ENCODE measurements at regions of chr11 and their contacts with region 1.

Region 1: GRCh38 chr11:6619004-6619745 is at the start of gene TPP1:
- DNase-seq: peak; percentile 79 to 96 (median 89)
- ATAC-seq: peak; percentile 91
- H3K4me3 ChIP-seq: peak within 1 kb of the TSS; percentile 80 to 89
- H3K4me3 Mint-ChIP-seq: no peak within 1 kb of the TSS
- H3K27ac ChIP-seq: peak within 1 kb of the TSS; percentile 75 to 96
- H3K27ac Mint-ChIP-seq: no peak within 1 kb of the TSS
- H3K4me1 ChIP-seq: peaks cover 23% of the 10 kb centered on the region
- H3K4me1 Mint-ChIP-seq: peaks cover 9% of the 10 kb centered on the region
- H3K27me3 ChIP-seq: no peaks in the 10 kb centered on the region
- H3K27me3 Mint-ChIP-seq: no peaks in the 10 kb centered on the region
- CTCF ChIP-seq: no peak
- total RNA-seq, gene TPP1: 31.1 to 34.8 TPM

Region 2: DNA sequence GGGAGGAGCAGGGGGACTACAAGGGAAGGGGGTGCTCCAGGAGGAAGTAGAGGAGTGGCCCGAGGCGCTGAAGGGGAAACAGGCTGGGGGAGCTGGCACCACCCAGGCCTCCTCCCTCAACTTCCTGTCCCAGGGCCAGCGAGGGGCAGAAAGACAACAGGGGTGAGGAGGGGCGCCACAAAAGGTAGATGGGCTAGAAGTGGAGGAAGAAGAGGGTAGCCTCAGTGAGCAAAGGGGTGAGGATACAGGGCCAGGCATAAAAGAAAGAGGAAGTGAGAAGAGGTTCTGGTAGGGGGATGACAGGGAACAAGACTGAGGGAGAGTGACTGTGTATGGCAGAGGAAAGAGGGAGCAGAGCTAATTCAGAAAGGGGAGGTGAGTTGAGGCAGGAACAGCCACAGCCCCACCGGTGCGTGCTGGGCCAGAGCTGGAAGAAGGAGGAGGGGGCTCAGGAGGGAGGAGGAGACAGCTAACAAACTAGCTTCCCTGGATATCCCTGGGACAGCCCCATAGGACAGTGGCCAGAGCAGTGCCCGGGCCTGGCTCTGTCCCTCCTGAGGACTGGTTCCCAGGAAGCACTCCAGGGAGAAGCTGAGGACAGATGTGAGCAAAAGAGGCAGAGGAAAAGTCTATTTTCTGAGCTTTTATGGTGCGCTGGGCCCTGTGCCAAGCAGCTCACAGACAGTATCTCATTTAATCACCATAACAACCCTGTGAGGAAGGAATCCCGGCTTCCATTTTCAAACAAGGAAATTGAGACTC is 27.9 kb after region 1 on chr11:
- CTCF ChIA-PET with region 1: interaction called, 9 read pairs
- POLR2A ChIA-PET with region 1: interaction called, 7 read pairs
- intact Hi-C with region 1: loop called in 1 of 2 experiments (anchors 2 kb)
- DNase-seq: peak in 8 of 9 experiments; percentile 17 to 76 (median 37)
- ATAC-seq: peak; percentile 61
- H3K4me3 ChIP-seq: peak overlapping the region; percentile 1 to 39
- H3K4me3 Mint-ChIP-seq: no peak overlapping the region
- H3K27ac ChIP-seq: peak overlapping the region; percentile 48 to 80
- H3K27ac Mint-ChIP-seq: no peak overlapping the region
- H3K4me1 ChIP-seq: peaks cover 79% of the 10 kb centered on the region
- H3K4me1 Mint-ChIP-seq: no peaks in the 10 kb centered on the region
- H3K27me3 ChIP-seq: no peaks in the 10 kb centered on the region
- H3K27me3 Mint-ChIP-seq: no peaks in the 10 kb centered on the region
- CTCF ChIP-seq: no peak

Region 3: GRCh38 chr11:6655020-6655789 is 36.0 kb after region 1 on chr11:
- CTCF ChIA-PET with region 1: interaction called, 3 read pairs
- POLR2A ChIA-PET with region 1: interaction called, 8 read pairs
- intact Hi-C with region 1: loop called in 1 of 2 experiments (anchors 2 kb)
- DNase-seq: peak in 7 of 9 experiments; percentile 11 to 62 (median 52)
- ATAC-seq: peak; percentile 58
- H3K4me3 ChIP-seq: peak overlapping the region; percentile 42 to 43
- H3K4me3 Mint-ChIP-seq: no peak overlapping the region
- H3K27ac ChIP-seq: peak overlapping the region; percentile 6 to 44
- H3K27ac Mint-ChIP-seq: no peak overlapping the region
- H3K4me1 ChIP-seq: peaks cover 36% of the 10 kb centered on the region
- H3K4me1 Mint-ChIP-seq: peaks cover 12% of the 10 kb centered on the region
- H3K27me3 ChIP-seq: no peaks in the 10 kb centered on the region
- H3K27me3 Mint-ChIP-seq: no peaks in the 10 kb centered on the region
- CTCF ChIP-seq: no peak

Region 4: DNA sequence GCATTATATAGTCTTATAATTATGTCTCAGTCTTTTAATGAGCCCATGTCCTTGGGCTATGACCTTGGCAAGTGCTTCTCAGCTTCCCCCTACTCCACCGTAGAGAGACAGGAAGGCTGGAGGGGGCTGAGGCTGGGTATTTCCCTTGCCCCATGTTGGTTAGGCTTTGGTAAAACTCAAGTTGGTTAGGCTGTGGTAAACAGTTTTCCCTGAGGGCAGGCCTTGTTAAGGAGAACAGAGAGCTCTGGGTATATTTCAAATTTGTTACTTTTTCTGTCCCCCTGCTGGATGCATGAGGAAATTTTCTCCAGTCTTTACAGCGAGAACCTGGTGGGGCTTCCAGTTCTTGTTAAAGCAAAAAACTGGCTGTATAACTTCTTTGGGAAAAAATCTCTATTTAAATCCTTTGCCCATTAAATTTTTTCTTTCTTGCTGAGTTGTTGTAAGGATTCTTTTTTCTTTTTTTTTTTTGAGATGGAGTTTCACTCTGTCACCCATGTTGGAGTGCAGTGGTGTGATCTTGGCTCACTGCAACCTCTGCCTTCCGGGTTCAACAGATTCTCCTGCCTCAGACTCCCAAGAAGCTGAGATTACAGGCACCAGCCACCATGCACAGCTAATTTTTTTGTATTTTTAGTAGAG is 48.7 kb after region 1 on chr11:
- CTCF ChIA-PET with region 1: interaction called, 13 read pairs
- POLR2A ChIA-PET with region 1: interaction called, 9 read pairs
- intact Hi-C with region 1: loop called in 1 of 2 experiments (anchors 2 kb)
- DNase-seq: peak in 6 of 9 experiments; percentile 16 to 81 (median 50)
- ATAC-seq: peak; percentile 76
- H3K4me3 ChIP-seq: no peak overlapping the region
- H3K4me3 Mint-ChIP-seq: peak overlapping the region; percentile 13
- H3K27ac ChIP-seq: peak overlapping the region in 1 of 2 experiments; percentile 47
- H3K27ac Mint-ChIP-seq: peak overlapping the region; percentile 81
- H3K4me1 ChIP-seq: peaks cover 59% of the 10 kb centered on the region
- H3K4me1 Mint-ChIP-seq: peaks cover 66% of the 10 kb centered on the region
- H3K27me3 ChIP-seq: no peaks in the 10 kb centered on the region
- H3K27me3 Mint-ChIP-seq: no peaks in the 10 kb centered on the region
- CTCF ChIP-seq: peak; percentile 57

Region 5: DNA sequence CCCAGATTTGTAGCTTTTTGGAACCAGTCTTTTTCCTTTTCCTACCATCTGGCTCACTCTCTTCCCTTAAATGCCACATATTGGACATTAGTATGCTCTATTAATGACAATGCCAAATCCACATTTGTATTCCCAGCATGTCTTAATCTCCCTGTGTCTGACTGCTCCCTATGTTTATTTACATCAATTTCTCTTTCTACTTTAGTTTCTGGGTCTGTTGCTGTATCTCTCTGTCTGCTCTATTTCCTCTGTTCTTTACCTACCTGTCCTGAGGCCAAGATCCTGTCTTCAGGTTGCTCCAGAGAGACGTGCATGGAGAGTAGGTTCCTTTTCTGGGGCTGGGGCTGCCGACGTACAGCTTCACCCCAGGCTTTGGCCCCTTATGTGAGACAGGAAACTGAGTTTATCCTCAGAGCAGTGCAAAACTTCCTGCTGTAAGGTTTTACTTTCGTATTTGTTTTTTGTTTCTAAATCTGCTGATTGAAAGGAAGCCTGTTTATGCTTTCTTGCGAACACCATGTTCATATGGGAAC is 127.0 kb after region 1 on chr11:
- CTCF ChIA-PET with region 1: interaction called, 5 read pairs
- POLR2A ChIA-PET with region 1: no interaction called
- intact Hi-C with region 1: loop called in 1 of 2 experiments (anchors 5 kb)
- DNase-seq: peak in 8 of 9 experiments; percentile 26 to 82 (median 55)
- ATAC-seq: peak; percentile 84
- H3K4me3 ChIP-seq: peak overlapping the region; percentile 61 to 65
- H3K4me3 Mint-ChIP-seq: no peak overlapping the region
- H3K27ac ChIP-seq: peak overlapping the region; percentile 69 to 89
- H3K27ac Mint-ChIP-seq: no peak overlapping the region
- H3K4me1 ChIP-seq: peaks cover 57% of the 10 kb centered on the region
- H3K4me1 Mint-ChIP-seq: peaks cover 46% of the 10 kb centered on the region
- H3K27me3 ChIP-seq: no peaks in the 10 kb centered on the region
- H3K27me3 Mint-ChIP-seq: no peaks in the 10 kb centered on the region
- CTCF ChIP-seq: no peak